ENCODE measurements at regions of chr17 and their contacts with region 1.

Region 1: DNA sequence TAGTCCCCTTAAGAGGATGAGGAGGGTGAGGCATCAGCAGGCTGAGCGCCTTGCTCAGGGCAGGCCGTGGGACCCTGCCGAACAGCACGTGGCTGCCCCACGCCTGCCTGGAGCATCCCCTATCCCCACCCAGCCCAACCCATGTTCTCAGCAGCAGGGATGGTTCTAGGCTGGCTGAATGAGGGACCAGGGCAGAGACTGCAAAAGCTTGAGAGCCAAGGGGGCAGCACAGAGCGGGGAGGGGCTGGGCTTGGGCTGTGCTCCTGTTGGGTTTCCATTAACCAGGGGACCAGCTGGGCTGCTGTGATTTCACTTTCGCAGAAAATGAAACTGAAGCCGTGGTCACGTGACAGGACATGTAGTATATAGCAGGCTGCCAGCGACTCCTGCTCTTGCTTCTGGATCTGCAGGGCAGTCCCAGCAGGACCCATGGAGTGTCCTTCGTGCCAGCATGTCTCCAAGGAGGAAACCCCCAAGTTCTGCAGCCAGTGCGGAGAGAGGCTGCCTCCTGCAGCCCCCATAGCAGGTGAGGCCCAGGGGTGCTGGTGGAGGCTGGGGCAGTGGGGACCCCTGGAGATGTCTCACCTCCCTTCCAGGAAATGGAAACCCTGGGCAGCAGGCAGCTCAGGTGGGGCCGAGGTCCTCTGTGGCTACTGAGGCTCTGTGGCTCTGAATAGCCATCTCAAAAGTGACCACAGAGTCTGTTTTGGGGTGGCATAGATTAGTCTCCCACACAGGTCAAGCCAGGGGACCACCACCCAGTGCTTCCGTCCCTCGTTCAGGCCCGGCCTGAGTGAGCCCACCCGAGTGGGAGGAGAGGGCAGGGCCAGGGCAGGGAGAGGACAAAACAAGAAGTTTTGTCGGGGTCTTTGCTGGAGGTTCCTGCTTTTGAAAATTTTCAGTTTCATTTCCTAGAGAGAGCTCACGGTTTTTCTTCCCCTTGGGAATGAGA is 2.9 kb downstream of the RNF213 start:
- DNase-seq: peak; percentile 55 to 94 (median 86)
- ATAC-seq: peak; percentile 32
- H3K4me3 ChIP-seq: peak overlapping the region; percentile 88 to 99
- H3K4me3 Mint-ChIP-seq: peak overlapping the region; percentile 91
- H3K27ac ChIP-seq: peak overlapping the region; percentile 53 to 78
- H3K27ac Mint-ChIP-seq: peak overlapping the region; percentile 90
- H3K4me1 ChIP-seq: peaks cover 62% of the 10 kb centered on the region
- H3K4me1 Mint-ChIP-seq: peaks cover 56% of the 10 kb centered on the region
- H3K27me3 ChIP-seq: no peaks in the 10 kb centered on the region
- H3K27me3 Mint-ChIP-seq: no peaks in the 10 kb centered on the region
- CTCF ChIP-seq: no peak

Region 2: DNA sequence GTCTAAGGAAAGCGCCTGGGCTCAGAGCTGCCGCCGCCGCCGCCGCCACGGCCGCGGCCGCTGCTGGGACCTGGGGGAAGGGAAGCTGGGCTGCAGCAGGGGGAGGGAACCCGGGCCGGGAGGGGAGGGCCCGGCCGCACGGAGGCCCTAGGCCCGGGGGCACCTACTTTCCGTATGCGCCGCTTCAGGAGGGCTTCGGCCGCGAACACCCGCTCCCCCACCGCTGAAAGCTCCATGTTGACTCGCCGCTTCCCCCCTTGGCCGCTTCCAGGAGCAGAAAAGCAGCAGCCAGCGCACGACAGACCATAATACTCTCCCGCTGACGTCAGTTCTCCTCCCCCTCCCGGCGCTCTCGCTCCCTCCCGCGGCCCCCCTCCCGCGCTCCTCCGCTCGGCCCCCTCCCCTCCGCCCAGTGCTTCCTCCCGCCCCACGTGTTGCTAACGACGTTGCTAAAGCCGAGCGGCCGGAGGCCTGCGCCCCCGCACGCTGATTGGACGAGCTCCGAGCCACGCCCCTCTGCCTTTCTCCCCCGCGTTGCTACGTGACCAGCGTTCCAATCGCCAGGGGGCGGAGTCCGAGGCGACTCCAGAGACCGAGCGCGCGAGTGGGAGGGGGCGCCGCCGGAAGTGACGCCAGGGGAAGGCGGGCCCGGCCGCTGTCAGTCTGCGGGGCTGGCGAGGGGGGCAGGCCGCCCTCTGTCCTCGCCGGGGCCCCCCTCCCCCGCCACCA is 466.6 kb before region 1 on chr17 and contains the start of gene CBX8:
- CTCF ChIA-PET with region 1: no interaction called
- POLR2A ChIA-PET with region 1: no interaction called
- intact Hi-C with region 1: loop called in 1 of 2 experiments (anchors 5 kb)
- DNase-seq: peak; percentile 98 to 100 (median 99)
- ATAC-seq: peak; percentile 87
- H3K4me3 ChIP-seq: peak within 1 kb of the TSS; percentile 51 to 68
- H3K4me3 Mint-ChIP-seq: peak within 1 kb of the TSS; percentile 86
- H3K27ac ChIP-seq: peak within 1 kb of the TSS; percentile 60 to 72
- H3K27ac Mint-ChIP-seq: peak within 1 kb of the TSS; percentile 91
- H3K4me1 ChIP-seq: peaks cover 48% of the 10 kb centered on the region
- H3K4me1 Mint-ChIP-seq: peaks cover 38% of the 10 kb centered on the region
- H3K27me3 ChIP-seq: peaks cover 47 to 48% of the 10 kb centered on the region in 2 experiments
- H3K27me3 Mint-ChIP-seq: peaks cover 37% of the 10 kb centered on the region
- CTCF ChIP-seq: no peak
- total RNA-seq, gene CBX8: 3.7 to 4.0 TPM

Region 3: GRCh38 chr17:80195731-80196529 is 67.6 kb before region 1 on chr17:
- CTCF ChIA-PET with region 1: interaction called, 14 read pairs
- POLR2A ChIA-PET with region 1: no interaction called
- intact Hi-C with region 1: no loop called
- DNase-seq: peak; percentile 31 to 81 (median 63)
- ATAC-seq: peak; percentile 52
- H3K4me3 ChIP-seq: no peak overlapping the region
- H3K4me3 Mint-ChIP-seq: no peak overlapping the region
- H3K27ac ChIP-seq: no peak overlapping the region
- H3K27ac Mint-ChIP-seq: no peak overlapping the region
- H3K4me1 ChIP-seq: no peaks in the 10 kb centered on the region
- H3K4me1 Mint-ChIP-seq: no peaks in the 10 kb centered on the region
- H3K27me3 ChIP-seq: no peaks in the 10 kb centered on the region
- H3K27me3 Mint-ChIP-seq: peaks cover 6% of the 10 kb centered on the region
- CTCF ChIP-seq: peak; percentile 97

Region 4: GRCh38 chr17:80307994-80308691 is 44.6 kb after region 1 on chr17:
- CTCF ChIA-PET with region 1: no interaction called
- POLR2A ChIA-PET with region 1: no interaction called
- intact Hi-C with region 1: no loop called
- DNase-seq: no peak
- ATAC-seq: no peak
- H3K4me3 ChIP-seq: no peak overlapping the region
- H3K4me3 Mint-ChIP-seq: no peak overlapping the region
- H3K27ac ChIP-seq: no peak overlapping the region
- H3K27ac Mint-ChIP-seq: peak overlapping the region; percentile 69
- H3K4me1 ChIP-seq: no peaks in the 10 kb centered on the region
- H3K4me1 Mint-ChIP-seq: no peaks in the 10 kb centered on the region
- H3K27me3 ChIP-seq: no peaks in the 10 kb centered on the region
- H3K27me3 Mint-ChIP-seq: no peaks in the 10 kb centered on the region
- CTCF ChIP-seq: no peak

Region 5: GRCh38 chr17:80414803-80415625 is 151.5 kb after region 1 on chr17 and contains the start of gene ENDOV:
- CTCF ChIA-PET with region 1: no interaction called
- POLR2A ChIA-PET with region 1: no interaction called
- intact Hi-C with region 1: loop called in 1 of 2 experiments (anchors 10 kb)
- DNase-seq: peak; percentile 87 to 99 (median 95)
- ATAC-seq: peak; percentile 83
- H3K4me3 ChIP-seq: peak within 1 kb of the TSS; percentile 79 to 97
- H3K4me3 Mint-ChIP-seq: peak within 1 kb of the TSS; percentile 85
- H3K27ac ChIP-seq: peak within 1 kb of the TSS; percentile 82 to 87
- H3K27ac Mint-ChIP-seq: peak within 1 kb of the TSS; percentile 87
- H3K4me1 ChIP-seq: peaks cover 18% of the 10 kb centered on the region
- H3K4me1 Mint-ChIP-seq: peaks cover 26% of the 10 kb centered on the region
- H3K27me3 ChIP-seq: peaks cover 0 to 4% of the 10 kb centered on the region in 2 experiments
- H3K27me3 Mint-ChIP-seq: no peaks in the 10 kb centered on the region
- CTCF ChIP-seq: no peak
- total RNA-seq, gene ENDOV: 8.2 to 11.6 TPM

Measured in CD8-positive, alpha-beta T cell (primary cell).